ENCODE measurements at regions of chr2 and their contacts with region 1.

Region 1: GRCh38 chr2:202033321-202034248 is at the start of gene FZD7:
- DNase-seq: peak; percentile 87
- H3K4me3 ChIP-seq: peak within 1 kb of the TSS; percentile 88
- H3K27ac ChIP-seq: peak within 1 kb of the TSS; percentile 97
- H3K27me3 ChIP-seq: no peaks in the 10 kb centered on the region
- CTCF ChIP-seq: peak; percentile 15; the same call in 1 of the 2 replicates
- polyA plus RNA-seq, gene FZD7: 40.6 and 42.9 TPM in 2 replicates

Region 2: DNA sequence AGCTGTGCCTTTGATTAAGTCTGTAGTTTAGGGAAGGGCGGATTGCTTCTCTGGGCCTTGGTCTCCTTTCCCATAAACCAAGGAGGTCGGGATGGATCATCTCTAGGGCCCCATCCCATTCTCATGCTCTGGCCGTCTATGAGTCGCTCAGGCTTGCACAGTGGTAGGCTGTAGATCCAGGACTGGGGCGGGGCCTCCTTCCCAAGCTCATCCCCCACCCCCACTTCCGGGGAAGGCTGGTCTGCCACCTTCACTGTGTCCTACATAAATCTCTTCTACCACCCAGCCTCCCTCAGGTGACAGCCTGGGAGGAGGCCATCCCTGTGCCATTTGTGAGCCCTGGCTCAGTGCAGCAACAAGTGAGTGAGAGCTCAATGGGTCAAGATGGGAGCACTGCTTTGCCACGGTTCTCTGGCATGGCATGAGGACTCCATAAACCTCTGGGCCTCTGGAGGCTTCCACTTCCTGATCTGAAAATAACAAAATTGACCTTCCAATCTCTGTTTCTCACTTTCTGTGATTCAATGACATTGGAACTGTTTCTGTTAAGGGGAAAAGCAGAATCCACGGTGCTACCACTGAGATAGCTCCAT is 136.3 kb after region 1 on chr2:
- CTCF ChIA-PET with region 1: interaction called, 11 read pairs
- POLR2A ChIA-PET with region 1: interaction called, 10 read pairs
- DNase-seq: no peak
- H3K4me3 ChIP-seq: no peak overlapping the region
- H3K27ac ChIP-seq: no peak overlapping the region
- H3K27me3 ChIP-seq: no peaks in the 10 kb centered on the region
- CTCF ChIP-seq: no peak

Region 3: DNA sequence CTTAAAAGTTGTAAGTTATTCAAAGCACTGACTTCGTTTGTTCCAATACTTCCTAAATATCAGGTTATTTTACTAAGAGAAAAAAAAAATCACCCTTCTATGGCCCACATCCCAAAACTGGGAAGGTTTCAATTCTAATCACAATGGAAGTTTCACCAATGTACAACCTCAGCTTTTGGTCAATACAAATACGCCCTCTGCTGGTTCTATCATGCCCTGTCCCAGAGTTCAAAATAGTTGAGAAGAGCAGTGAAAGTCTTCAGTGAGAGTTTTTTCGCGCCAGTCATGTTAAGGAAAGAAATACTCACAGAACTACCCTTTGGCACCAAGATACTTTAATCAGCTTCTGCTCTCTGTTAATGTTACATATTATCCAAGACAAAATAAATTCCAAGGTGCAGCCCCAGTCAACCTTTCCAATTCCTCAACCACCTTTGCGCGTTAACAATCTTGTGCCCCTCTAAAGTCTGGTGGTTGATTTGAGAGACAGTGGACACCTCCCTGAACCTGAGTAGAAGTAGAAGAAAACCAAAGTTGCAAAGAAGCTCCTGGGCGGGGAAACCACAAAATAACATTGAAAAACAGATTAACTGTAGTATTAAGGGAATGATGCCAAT is 144.9 kb after region 1 on chr2:
- CTCF ChIA-PET with region 1: interaction called, 24 read pairs
- POLR2A ChIA-PET with region 1: interaction called, 4 read pairs
- DNase-seq: peak; percentile 43
- H3K4me3 ChIP-seq: no peak overlapping the region
- H3K27ac ChIP-seq: no peak overlapping the region
- H3K27me3 ChIP-seq: no peaks in the 10 kb centered on the region
- CTCF ChIP-seq: peak; percentile 83

Measured in AG04450 (cell line).